Endothelial cell of umbilical vein (primary cell): ENCODE measurements at regions of chr4 and their contacts with region 1.

Region 1: GRCh38 chr4:186900232-186900900 is 176.7 kb upstream of the FAT1 start:
- DNase-seq: peak; percentile 91
- H3K4me3 ChIP-seq: no peak overlapping the region
- H3K27ac ChIP-seq: peak overlapping the region; percentile 96
- H3K4me1 ChIP-seq: peaks cover 18% of the 10 kb centered on the region
- H3K27me3 ChIP-seq: no peaks in the 10 kb centered on the region
- CTCF ChIP-seq: no peak
- POLR2A ChIP-seq: no peak

Region 2: GRCh38 chr4:186719925-186720694 is 180.3 kb before region 1 on chr4:
- CTCF ChIA-PET with region 1: no interaction called
- POLR2A ChIA-PET with region 1: no interaction called
- dilution Hi-C with region 1: no loop called
- intact Hi-C with region 1: no loop called
- DNase-seq: no peak
- H3K4me3 ChIP-seq: no peak overlapping the region
- H3K27ac ChIP-seq: no peak overlapping the region
- H3K4me1 ChIP-seq: peaks cover 11% of the 10 kb centered on the region
- H3K27me3 ChIP-seq: peaks cover 21 to 32% of the 10 kb centered on the region in 2 experiments
- CTCF ChIP-seq: peak; percentile 9 to 11
- POLR2A ChIP-seq: no peak

Region 3: GRCh38 chr4:186936496-186937375 is 36.4 kb after region 1 on chr4:
- CTCF ChIA-PET with region 1: no interaction called
- POLR2A ChIA-PET with region 1: no interaction called
- dilution Hi-C with region 1: no loop called
- intact Hi-C with region 1: loop called (anchors 2 kb)
- DNase-seq: peak; percentile 55
- H3K4me3 ChIP-seq: peak overlapping the region in 1 of 3 experiments; percentile 30
- H3K27ac ChIP-seq: no peak overlapping the region
- H3K4me1 ChIP-seq: no peaks in the 10 kb centered on the region
- H3K27me3 ChIP-seq: no peaks in the 10 kb centered on the region
- CTCF ChIP-seq: no peak
- POLR2A ChIP-seq: no peak

Region 4: DNA sequence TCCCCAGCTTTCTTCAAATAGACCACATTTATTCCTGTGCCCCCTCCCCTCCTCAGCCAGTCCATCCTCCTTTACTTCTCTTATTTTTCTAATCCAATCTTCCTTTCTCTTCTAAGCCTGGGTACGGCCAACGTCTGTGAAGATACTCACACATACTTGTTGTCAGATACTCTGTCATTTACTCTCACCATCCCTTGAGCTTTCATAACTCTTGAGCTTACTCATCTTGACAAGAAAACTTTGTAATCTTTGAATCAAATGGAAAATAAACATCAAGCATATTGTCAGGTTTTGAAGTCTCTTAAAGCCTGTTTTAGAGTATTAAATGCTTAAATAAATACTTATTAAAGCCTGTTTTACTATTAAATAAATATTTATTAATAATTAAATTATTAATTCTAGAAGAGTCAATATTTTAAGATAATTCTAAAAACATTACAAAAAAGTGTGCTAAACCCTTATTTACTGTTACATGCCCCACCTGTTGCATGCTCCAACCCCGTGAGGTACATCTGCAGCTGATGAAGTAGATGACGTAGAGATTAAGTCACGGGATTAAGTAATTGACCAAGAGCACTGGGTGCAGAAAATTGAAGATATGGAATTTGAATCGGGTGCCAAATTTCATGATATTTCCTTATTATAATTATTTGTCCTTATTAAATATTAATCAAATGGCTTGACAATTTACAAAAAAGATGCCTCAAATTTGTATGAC is 1210.5 kb after region 1 on chr4:
- CTCF ChIA-PET with region 1: no interaction called
- POLR2A ChIA-PET with region 1: no interaction called
- dilution Hi-C with region 1: no loop called
- intact Hi-C with region 1: no loop called
- DNase-seq: no peak
- H3K4me3 ChIP-seq: no peak overlapping the region
- H3K27ac ChIP-seq: no peak overlapping the region
- H3K4me1 ChIP-seq: no peaks in the 10 kb centered on the region
- H3K27me3 ChIP-seq: no peaks in the 10 kb centered on the region
- CTCF ChIP-seq: no peak
- POLR2A ChIP-seq: no peak